B cell (primary cell): ENCODE measurements at regions of chr12 and their contacts with region 1.

Region 1: GRCh38 chr12:50504798-50505385 is at the start of gene DIP2B:
- DNase-seq: peak; percentile 96
- ATAC-seq: peak; percentile 89
- H3K4me3 ChIP-seq: peak within 1 kb of the TSS; percentile 74 to 99 (median 87)
- H3K4me3 Mint-ChIP-seq: peak within 1 kb of the TSS; percentile 94
- H3K27ac ChIP-seq: peak within 1 kb of the TSS; percentile 65 to 89
- H3K27ac Mint-ChIP-seq: peak within 1 kb of the TSS; percentile 94
- H3K4me1 ChIP-seq: peaks cover 41 to 44% of the 10 kb centered on the region in 2 donors
- H3K4me1 Mint-ChIP-seq: peaks cover 44% of the 10 kb centered on the region
- H3K27me3 ChIP-seq: no peaks in the 10 kb centered on the region
- H3K27me3 Mint-ChIP-seq: no peaks in the 10 kb centered on the region
- CTCF ChIP-seq: peak; percentile 87
- total RNA-seq, gene DIP2B: 38.8 and 45.5 TPM in 2 replicates

Region 2: GRCh38 chr12:49366652-49367380 is 1138.1 kb before region 1 on chr12:
- CTCF ChIA-PET with region 1: no interaction called
- POLR2A ChIA-PET with region 1: interaction called, 11 read pairs
- intact Hi-C with region 1: no loop called
- DNase-seq: peak; percentile 90
- ATAC-seq: peak; percentile 78
- H3K4me3 ChIP-seq: peak overlapping the region; percentile 61 to 96 (median 80)
- H3K4me3 Mint-ChIP-seq: peak overlapping the region; percentile 87
- H3K27ac ChIP-seq: peak overlapping the region; percentile 90 to 91
- H3K27ac Mint-ChIP-seq: peak overlapping the region; percentile 98
- H3K4me1 ChIP-seq: peaks cover 33 to 39% of the 10 kb centered on the region in 2 donors
- H3K4me1 Mint-ChIP-seq: peaks cover 46% of the 10 kb centered on the region
- H3K27me3 ChIP-seq: no peaks in the 10 kb centered on the region
- H3K27me3 Mint-ChIP-seq: no peaks in the 10 kb centered on the region
- CTCF ChIP-seq: peak; percentile 44

Region 3: GRCh38 chr12:50442178-50442908 is 62.5 kb before region 1 on chr12:
- CTCF ChIA-PET with region 1: no interaction called
- POLR2A ChIA-PET with region 1: no interaction called
- intact Hi-C with region 1: no loop called
- DNase-seq: no peak
- ATAC-seq: no peak
- H3K4me3 ChIP-seq: no peak overlapping the region
- H3K4me3 Mint-ChIP-seq: no peak overlapping the region
- H3K27ac ChIP-seq: no peak overlapping the region
- H3K27ac Mint-ChIP-seq: no peak overlapping the region
- H3K4me1 ChIP-seq: no peaks in the 10 kb centered on the region
- H3K4me1 Mint-ChIP-seq: no peaks in the 10 kb centered on the region
- H3K27me3 ChIP-seq: no peaks in the 10 kb centered on the region
- H3K27me3 Mint-ChIP-seq: no peaks in the 10 kb centered on the region
- CTCF ChIP-seq: no peak

Region 4: DNA sequence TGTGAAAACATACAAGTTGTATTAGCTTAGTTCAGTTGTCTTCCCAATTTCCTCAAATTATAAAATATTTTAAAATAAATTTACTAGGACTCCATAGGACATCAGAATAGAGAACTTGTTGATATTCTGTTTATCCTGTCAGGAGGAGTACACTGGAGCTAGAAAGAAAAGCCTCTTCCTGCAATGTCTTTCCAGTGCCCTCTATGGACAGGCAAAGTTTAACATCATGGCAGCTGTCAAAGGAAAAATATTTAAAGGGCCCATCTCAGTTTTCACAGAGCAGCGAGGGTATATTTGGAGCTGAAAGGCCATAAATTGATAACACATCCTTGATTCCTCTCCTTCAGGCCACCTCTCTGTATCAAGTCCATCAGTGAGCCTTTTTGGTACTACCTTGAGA is 18.9 kb after region 1 on chr12:
- CTCF ChIA-PET with region 1: interaction called, 31 read pairs
- POLR2A ChIA-PET with region 1: interaction called, 10 read pairs
- intact Hi-C with region 1: no loop called
- DNase-seq: no peak
- ATAC-seq: no peak
- H3K4me3 ChIP-seq: no peak overlapping the region
- H3K4me3 Mint-ChIP-seq: no peak overlapping the region
- H3K27ac ChIP-seq: peak overlapping the region in 1 of 2 donors; percentile 54
- H3K27ac Mint-ChIP-seq: no peak overlapping the region
- H3K4me1 ChIP-seq: peaks cover 56 to 76% of the 10 kb centered on the region in 2 donors
- H3K4me1 Mint-ChIP-seq: peaks cover 58% of the 10 kb centered on the region
- H3K27me3 ChIP-seq: no peaks in the 10 kb centered on the region
- H3K27me3 Mint-ChIP-seq: no peaks in the 10 kb centered on the region
- CTCF ChIP-seq: no peak

Region 5: GRCh38 chr12:50597200-50598195 is 92.6 kb after region 1 on chr12:
- CTCF ChIA-PET with region 1: interaction called, 3 read pairs
- POLR2A ChIA-PET with region 1: no interaction called
- intact Hi-C with region 1: loop called (anchors 2 kb)
- DNase-seq: peak; percentile 50
- ATAC-seq: peak; percentile 81
- H3K4me3 ChIP-seq: peak overlapping the region in 3 of 5 experiments; percentile 9 to 23 (median 17)
- H3K4me3 Mint-ChIP-seq: peak overlapping the region; percentile 57
- H3K27ac ChIP-seq: peak overlapping the region; percentile 28 to 75
- H3K27ac Mint-ChIP-seq: peak overlapping the region; percentile 54
- H3K4me1 ChIP-seq: peaks cover 19 to 20% of the 10 kb centered on the region in 2 donors
- H3K4me1 Mint-ChIP-seq: peaks cover 49% of the 10 kb centered on the region
- H3K27me3 ChIP-seq: no peaks in the 10 kb centered on the region
- H3K27me3 Mint-ChIP-seq: no peaks in the 10 kb centered on the region
- CTCF ChIP-seq: no peak

Region 6: GRCh38 chr12:50637870-50638481 is 133.1 kb after region 1 on chr12:
- CTCF ChIA-PET with region 1: interaction called, 184 read pairs
- POLR2A ChIA-PET with region 1: interaction called, 8 read pairs
- intact Hi-C with region 1: loop called (anchors 1 kb)
- DNase-seq: peak; percentile 67
- ATAC-seq: peak; percentile 62
- H3K4me3 ChIP-seq: no peak overlapping the region
- H3K4me3 Mint-ChIP-seq: no peak overlapping the region
- H3K27ac ChIP-seq: peak overlapping the region in 1 of 2 donors; percentile 70
- H3K27ac Mint-ChIP-seq: peak overlapping the region; percentile 27
- H3K4me1 ChIP-seq: peaks cover 3 to 10% of the 10 kb centered on the region in 2 donors
- H3K4me1 Mint-ChIP-seq: peaks cover 18% of the 10 kb centered on the region
- H3K27me3 ChIP-seq: no peaks in the 10 kb centered on the region
- H3K27me3 Mint-ChIP-seq: no peaks in the 10 kb centered on the region
- CTCF ChIP-seq: peak; percentile 82

Region 7: GRCh38 chr12:50924439-50925341 is 419.8 kb after region 1 on chr12:
- CTCF ChIA-PET with region 1: interaction called, 4 read pairs
- POLR2A ChIA-PET with region 1: no interaction called
- intact Hi-C with region 1: loop called (anchors 10 kb)
- DNase-seq: peak; percentile 83
- ATAC-seq: peak; percentile 94
- H3K4me3 ChIP-seq: peak overlapping the region; percentile 75 to 99 (median 88)
- H3K4me3 Mint-ChIP-seq: peak overlapping the region; percentile 96
- H3K27ac ChIP-seq: peak overlapping the region; percentile 81 to 91
- H3K27ac Mint-ChIP-seq: peak overlapping the region; percentile 98
- H3K4me1 ChIP-seq: peaks cover 43 to 44% of the 10 kb centered on the region in 2 donors
- H3K4me1 Mint-ChIP-seq: peaks cover 63% of the 10 kb centered on the region
- H3K27me3 ChIP-seq: no peaks in the 10 kb centered on the region
- H3K27me3 Mint-ChIP-seq: no peaks in the 10 kb centered on the region
- CTCF ChIP-seq: no peak